HEK293T (cell line): ENCODE measurements at regions of chr17 and their contacts with region 1.

Region 1: GRCh38 chr17:50094753-50095619 is at the start of gene PDK2:
- DNase-seq: peak; percentile 97

Region 2: DNA sequence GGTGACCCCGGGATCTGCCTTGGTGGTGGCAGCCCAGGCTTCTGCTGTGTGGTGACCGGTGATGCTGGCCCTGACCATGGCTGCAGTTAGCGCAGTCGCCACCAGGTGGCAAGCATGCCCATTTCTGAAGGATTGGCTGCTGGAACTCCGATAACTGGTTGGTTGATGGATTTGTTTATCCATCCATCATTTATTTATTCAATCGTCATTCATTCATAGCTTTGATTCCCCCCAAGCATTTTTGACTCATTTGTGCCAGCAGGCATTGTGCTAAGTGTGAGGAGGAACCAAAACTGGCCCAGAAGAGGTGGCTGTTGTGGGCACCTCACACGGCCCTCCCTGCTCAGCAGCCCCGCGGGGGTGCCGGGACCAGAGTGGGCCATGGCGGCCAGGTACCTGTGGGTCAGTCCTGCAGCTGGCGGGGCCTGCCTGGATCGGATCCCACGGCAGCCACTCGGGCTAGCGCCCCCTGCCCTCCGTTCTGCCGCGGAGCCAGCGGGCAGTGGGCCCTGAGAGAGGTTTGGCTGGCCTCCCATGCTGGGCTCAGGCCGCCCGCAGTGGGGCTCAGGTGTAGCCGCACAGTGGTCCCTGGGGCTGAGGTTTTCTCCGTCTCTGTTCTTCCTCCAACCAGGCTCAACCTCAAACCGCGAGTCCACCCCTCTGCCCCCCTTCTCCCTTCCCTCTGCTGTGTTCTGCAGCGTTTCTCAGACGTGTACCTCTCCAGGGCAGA is 67.9 kb before region 1 on chr17:
- CTCF ChIA-PET with region 1: interaction called, 24 read pairs
- POLR2A ChIA-PET with region 1: interaction called, 3 read pairs
- DNase-seq: peak; percentile 89

Region 3: GRCh38 chr17:50043290-50044148 is 51.5 kb before region 1 on chr17:
- CTCF ChIA-PET with region 1: no interaction called
- POLR2A ChIA-PET with region 1: no interaction called
- DNase-seq: no peak

Region 4: DNA sequence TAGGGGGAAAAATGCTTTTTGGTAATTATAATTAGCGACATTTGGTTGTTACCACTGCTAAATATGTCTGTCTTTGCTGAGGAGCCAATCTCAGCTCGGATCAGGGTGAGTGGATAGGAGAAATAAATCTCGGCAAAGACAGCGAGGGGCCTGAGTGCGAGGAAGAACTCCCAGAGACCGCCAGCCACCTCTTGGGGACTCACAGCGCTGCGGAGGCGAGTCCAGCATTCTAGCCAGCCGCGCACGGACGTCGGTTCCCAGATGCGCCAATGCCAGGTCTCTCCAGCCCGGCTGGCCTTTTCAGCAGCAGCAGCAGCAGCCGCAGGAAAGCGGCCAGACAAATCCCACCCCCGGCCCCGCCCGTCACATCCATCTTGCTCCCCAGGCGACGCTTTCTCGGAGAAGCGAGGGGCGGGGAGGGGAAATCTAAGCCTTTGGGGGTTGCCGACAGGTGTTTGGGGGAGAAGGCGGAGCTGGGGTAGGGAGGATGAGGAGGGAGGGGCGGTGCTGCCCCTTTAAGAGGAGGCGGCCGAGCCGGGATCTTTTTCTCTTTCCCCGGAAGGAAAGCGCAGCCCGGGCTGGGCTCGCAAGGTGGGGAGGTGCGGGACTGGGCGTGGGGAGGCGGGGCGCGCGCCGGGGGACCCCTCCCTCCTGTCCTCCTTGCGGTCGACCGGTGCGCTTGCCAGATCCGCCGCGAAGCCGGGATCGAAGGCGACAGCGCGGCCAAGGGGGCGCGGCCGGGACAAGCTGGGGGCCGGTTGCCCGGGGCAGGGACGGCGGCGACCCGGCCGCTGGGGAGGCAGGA is 39.4 kb before region 1 on chr17 and contains the start of gene ITGA3:
- CTCF ChIA-PET with region 1: interaction called, 14 read pairs
- POLR2A ChIA-PET with region 1: interaction called, 7 read pairs
- DNase-seq: peak; percentile 74

Region 5: DNA sequence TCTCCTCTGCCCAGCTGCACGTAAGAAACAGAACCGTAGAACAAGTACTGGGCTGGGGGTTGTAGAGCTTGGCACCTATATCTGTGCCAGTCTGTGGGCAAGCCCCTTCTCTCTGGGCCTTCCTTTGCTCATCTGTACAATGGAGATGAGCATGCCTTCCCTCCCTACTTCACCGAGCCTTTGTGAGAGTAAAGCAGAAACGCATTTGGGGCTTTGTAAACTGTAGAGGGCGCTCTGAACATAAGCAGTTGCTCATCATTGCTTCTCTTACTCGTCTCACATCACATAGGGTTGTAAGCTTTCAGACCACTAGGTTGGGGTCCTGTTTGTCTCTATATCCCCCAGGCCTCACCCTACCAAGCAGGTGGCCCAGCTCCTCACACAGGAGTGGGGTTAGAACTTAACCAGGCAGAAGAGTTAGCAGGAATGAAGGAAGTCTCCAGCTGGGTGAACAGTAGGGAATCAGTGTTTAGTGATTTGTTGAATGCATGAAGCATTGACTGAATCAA is 19.9 kb after region 1 on chr17:
- CTCF ChIA-PET with region 1: interaction called, 16 read pairs
- POLR2A ChIA-PET with region 1: interaction called, 3 read pairs
- DNase-seq: peak; percentile 70

Region 6: GRCh38 chr17:50151041-50151936 is 56.3 kb after region 1 on chr17:
- CTCF ChIA-PET with region 1: interaction called, 8 read pairs
- POLR2A ChIA-PET with region 1: interaction called, 13 read pairs
- DNase-seq: peak; percentile 93

Region 7: DNA sequence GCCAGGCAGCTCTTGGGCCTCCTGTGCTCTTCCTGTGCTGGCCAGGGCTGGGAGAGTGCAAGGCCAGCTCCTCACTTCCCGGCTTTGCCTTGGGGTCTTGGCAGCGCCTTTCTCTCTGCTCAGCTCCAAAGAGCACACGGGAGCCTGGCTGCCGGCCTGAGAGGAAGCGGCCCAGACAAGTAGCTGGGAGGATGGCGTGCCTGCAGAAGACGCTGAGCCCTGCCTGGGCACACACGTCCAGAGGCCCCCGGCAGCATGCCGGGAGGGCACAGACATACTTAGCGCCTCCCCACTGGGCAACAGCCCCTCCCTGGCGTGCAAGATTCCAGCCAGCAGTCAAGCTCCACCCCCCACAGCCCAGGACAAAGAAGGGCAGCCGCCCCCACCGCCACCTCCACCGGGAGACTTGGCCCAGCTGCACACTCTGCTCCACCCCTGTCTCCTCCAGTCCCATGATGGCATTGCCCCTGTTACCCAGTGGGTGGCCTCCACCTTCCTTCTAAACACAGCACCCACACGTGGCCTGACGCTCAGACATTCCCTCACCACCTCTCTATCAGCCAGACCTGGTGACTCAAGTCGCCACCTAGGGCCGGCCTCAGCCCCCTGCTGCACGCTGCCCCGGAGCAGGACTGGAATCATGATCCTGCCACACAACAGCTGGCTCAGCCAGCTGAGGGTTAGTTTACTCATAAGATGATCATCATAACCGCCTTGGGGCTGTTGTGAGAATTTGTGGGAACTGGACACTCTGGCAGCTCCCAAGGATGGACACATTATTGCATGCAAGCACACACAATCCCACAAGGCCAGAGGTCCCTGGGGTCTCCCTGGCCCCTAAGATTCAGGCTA is 83.2 kb after region 1 on chr17:
- CTCF ChIA-PET with region 1: interaction called, 13 read pairs
- POLR2A ChIA-PET with region 1: no interaction called
- DNase-seq: peak; percentile 80